ENCODE measurements at regions of chr12 and their contacts with region 1.

Region 1: DNA sequence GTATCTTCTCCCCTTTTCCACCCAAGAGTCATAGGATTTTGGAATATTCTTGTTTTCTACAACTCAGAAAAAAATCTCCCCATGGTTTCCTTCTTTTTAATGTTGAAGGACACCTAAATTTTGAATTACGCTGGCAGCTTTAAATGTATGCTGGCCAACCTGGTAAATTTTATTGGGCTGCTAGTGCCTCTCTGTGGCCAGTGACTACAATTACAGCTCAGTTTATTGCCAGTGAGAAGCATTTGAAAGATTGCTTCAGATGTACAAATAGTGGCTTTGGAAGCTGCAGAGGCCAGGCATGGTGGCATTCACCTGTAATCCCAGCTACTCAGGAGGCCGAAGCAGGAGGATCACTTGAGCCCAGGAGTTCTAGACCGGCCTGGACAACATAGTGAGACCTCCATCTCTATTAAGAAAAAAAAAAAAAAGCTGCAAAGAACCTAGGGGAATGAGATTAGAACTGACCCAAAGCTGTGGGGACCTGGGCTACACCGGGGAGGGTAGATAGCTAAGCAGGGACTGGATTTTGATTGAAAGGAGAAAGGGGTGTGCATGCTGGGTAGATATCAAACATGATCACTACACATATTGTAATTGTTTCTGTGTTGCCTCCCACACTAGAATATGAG is 7.6 kb upstream of the RAB21 start:
- DNase-seq: peak; percentile 57
- H3K4me3 Mint-ChIP-seq: no peak overlapping the region
- H3K27ac Mint-ChIP-seq: no peak overlapping the region
- H3K4me1 Mint-ChIP-seq: no peaks in the 10 kb centered on the region
- H3K27me3 Mint-ChIP-seq: peaks cover 39% of the 10 kb centered on the region

Region 2: GRCh38 chr12:71415336-71416231 is 331.5 kb before region 1 on chr12:
- CTCF ChIA-PET with region 1: interaction called, 10 read pairs
- POLR2A ChIA-PET with region 1: no interaction called
- DNase-seq: peak; percentile 59
- H3K4me3 Mint-ChIP-seq: no peak overlapping the region
- H3K27ac Mint-ChIP-seq: no peak overlapping the region
- H3K4me1 Mint-ChIP-seq: no peaks in the 10 kb centered on the region
- H3K27me3 Mint-ChIP-seq: peaks cover 27% of the 10 kb centered on the region

Region 3: GRCh38 chr12:71780237-71780822 is 33.2 kb after region 1 on chr12:
- CTCF ChIA-PET with region 1: no interaction called
- POLR2A ChIA-PET with region 1: no interaction called
- DNase-seq: peak; percentile 55
- H3K4me3 Mint-ChIP-seq: no peak overlapping the region
- H3K27ac Mint-ChIP-seq: peak overlapping the region; percentile 31
- H3K4me1 Mint-ChIP-seq: peaks cover 4% of the 10 kb centered on the region
- H3K27me3 Mint-ChIP-seq: no peaks in the 10 kb centered on the region

Region 4: GRCh38 chr12:71810905-71811304 is 63.8 kb after region 1 on chr12:
- CTCF ChIA-PET with region 1: no interaction called
- POLR2A ChIA-PET with region 1: no interaction called
- DNase-seq: no peak
- H3K4me3 Mint-ChIP-seq: no peak overlapping the region
- H3K27ac Mint-ChIP-seq: no peak overlapping the region
- H3K4me1 Mint-ChIP-seq: no peaks in the 10 kb centered on the region
- H3K27me3 Mint-ChIP-seq: peaks cover 25% of the 10 kb centered on the region